ENCODE measurements at regions of chr6 and their contacts with region 1.

Region 1: DNA sequence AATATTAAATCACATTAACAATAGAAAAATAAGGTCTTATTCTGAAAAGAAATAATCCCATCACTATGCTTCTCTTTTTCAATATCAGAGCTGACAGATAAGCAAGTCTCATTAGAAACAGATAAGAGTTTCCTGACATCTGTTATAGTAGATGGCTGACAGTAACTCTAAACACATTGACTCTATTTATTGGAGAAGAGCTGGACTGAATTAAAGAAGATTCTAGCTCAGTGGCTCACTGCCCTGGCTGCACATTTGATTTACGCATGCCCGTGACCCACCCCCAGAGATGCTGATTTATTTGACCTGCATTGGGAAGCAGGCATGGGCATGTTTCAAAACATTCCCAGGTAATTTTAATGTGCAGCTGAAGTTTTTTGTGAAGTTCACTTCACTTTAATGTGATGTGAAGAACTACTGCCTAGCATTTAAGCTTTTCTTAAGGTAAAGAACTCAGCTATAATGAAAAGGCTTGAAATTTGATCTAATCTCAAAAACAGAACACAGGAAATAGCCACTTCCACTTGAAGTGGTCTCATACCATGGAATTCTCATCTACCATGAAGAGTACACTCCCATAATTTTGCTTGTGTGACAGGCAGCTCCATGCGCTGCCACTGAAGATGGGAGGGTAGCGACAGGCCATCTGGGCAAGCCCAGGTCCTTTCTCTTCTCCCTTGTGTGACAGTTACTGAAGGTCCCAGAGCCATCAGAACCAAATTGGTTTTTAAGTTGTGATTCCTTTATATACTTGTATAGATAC is 162.3 kb downstream of the TPBG start:
- DNase-seq: no peak
- ATAC-seq: no peak
- H3K4me3 ChIP-seq: no peak overlapping the region
- H3K27ac ChIP-seq: no peak overlapping the region
- H3K4me1 ChIP-seq: no peaks in the 10 kb centered on the region
- H3K27me3 ChIP-seq: no peaks in the 10 kb centered on the region
- CTCF ChIP-seq: no peak
- EP300 ChIP-seq: no peak
- POLR2A ChIP-seq: no peak
- RAD21 ChIP-seq: no peak

Region 2: GRCh38 chr6:82467338-82467737 is 58.6 kb before region 1 on chr6:
- CTCF ChIA-PET with region 1: no interaction called
- POLR2A ChIA-PET with region 1: no interaction called
- RAD21 ChIA-PET with region 1: no interaction called
- SMC1A ChIA-PET with region 1: no interaction called
- in situ Hi-C with region 1: loop called (anchors 10 kb)
- intact Hi-C with region 1: no loop called
- DNase-seq: no peak
- ATAC-seq: no peak
- H3K4me3 ChIP-seq: no peak overlapping the region
- H3K27ac ChIP-seq: no peak overlapping the region
- H3K4me1 ChIP-seq: no peaks in the 10 kb centered on the region
- H3K27me3 ChIP-seq: no peaks in the 10 kb centered on the region
- CTCF ChIP-seq: no peak
- EP300 ChIP-seq: no peak
- POLR2A ChIP-seq: no peak
- RAD21 ChIP-seq: no peak

Region 3: GRCh38 chr6:82507112-82507511 is 18.8 kb before region 1 on chr6:
- CTCF ChIA-PET with region 1: no interaction called
- POLR2A ChIA-PET with region 1: no interaction called
- RAD21 ChIA-PET with region 1: no interaction called
- SMC1A ChIA-PET with region 1: interaction called, 3 read pairs
- in situ Hi-C with region 1: no loop called
- intact Hi-C with region 1: loop called (anchors 2 kb)
- DNase-seq: peak; percentile 21
- ATAC-seq: peak; percentile 80
- H3K4me3 ChIP-seq: no peak overlapping the region
- H3K27ac ChIP-seq: no peak overlapping the region
- H3K4me1 ChIP-seq: no peaks in the 10 kb centered on the region
- H3K27me3 ChIP-seq: no peaks in the 10 kb centered on the region
- CTCF ChIP-seq: no peak
- EP300 ChIP-seq: peak in 1 of 2 experiments; percentile 30; a peak in 1 of 4 replicates
- POLR2A ChIP-seq: no peak
- RAD21 ChIP-seq: no peak

Measured in GM12878 (cell line).